ENCODE measurements at regions of chr10 and their contacts with region 1.

Region 1: GRCh38 chr10:230737-231136 is 95.5 kb downstream of the ZMYND11 start:
- DNase-seq: no peak
- ATAC-seq: peak; percentile 55
- H3K4me3 Mint-ChIP-seq: no peak overlapping the region
- H3K27ac Mint-ChIP-seq: no peak overlapping the region
- H3K4me1 Mint-ChIP-seq: peaks cover 18% of the 10 kb centered on the region
- H3K27me3 Mint-ChIP-seq: no peaks in the 10 kb centered on the region
- CTCF ChIP-seq: peak; percentile 70

Region 2: DNA sequence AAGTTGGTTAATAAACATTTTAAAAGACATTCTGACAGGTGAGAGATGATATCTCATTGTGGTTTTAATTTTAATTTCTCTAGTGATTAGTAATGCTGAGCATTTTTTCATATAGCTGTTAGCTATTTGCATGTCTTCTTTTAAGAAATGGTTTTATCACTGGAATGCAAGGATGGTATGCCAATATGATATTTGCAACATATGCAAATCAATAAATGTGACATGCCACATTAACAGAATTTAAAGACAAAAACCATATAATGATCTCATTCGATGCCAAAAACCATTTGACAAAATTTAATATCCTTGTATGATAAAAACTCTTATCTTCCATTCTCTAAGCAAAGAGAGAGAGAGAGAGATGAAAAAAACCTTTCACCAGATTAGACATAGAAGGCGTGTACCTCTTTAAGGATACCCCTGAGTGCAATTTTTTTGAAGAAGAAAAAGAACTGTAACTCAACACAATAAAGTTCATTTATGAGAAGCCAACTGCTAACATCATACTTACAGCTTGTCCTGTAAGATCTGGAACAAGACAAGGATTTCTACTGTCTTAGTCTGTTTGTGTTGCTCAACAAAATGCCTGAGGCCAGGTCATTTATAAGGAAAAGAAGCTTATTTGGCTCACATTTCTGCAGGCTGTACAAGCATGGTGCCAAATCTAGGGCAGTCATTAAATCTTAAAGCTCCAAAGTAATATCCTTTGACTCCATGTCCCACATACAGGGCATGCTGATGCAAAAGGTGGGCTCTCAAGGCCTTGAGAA is 135.2 kb before region 1 on chr10:
- CTCF ChIA-PET with region 1: no interaction called
- POLR2A ChIA-PET with region 1: no interaction called
- intact Hi-C with region 1: no loop called
- DNase-seq: no peak
- ATAC-seq: no peak
- H3K4me3 Mint-ChIP-seq: no peak overlapping the region
- H3K27ac Mint-ChIP-seq: no peak overlapping the region
- H3K4me1 Mint-ChIP-seq: no peaks in the 10 kb centered on the region
- H3K27me3 Mint-ChIP-seq: no peaks in the 10 kb centered on the region
- CTCF ChIP-seq: no peak

Region 3: GRCh38 chr10:209361-209760 is 21.4 kb before region 1 on chr10:
- CTCF ChIA-PET with region 1: interaction called, 10 read pairs
- POLR2A ChIA-PET with region 1: no interaction called
- intact Hi-C with region 1: no loop called
- DNase-seq: no peak
- ATAC-seq: no peak
- H3K4me3 Mint-ChIP-seq: no peak overlapping the region
- H3K27ac Mint-ChIP-seq: no peak overlapping the region
- H3K4me1 Mint-ChIP-seq: no peaks in the 10 kb centered on the region
- H3K27me3 Mint-ChIP-seq: no peaks in the 10 kb centered on the region
- CTCF ChIP-seq: no peak

Region 4: GRCh38 chr10:218798-219197 is 11.9 kb before region 1 on chr10:
- CTCF ChIA-PET with region 1: interaction called, 23 read pairs
- POLR2A ChIA-PET with region 1: no interaction called
- intact Hi-C with region 1: no loop called
- DNase-seq: no peak
- ATAC-seq: no peak
- H3K4me3 Mint-ChIP-seq: no peak overlapping the region
- H3K27ac Mint-ChIP-seq: no peak overlapping the region
- H3K4me1 Mint-ChIP-seq: peaks cover 28% of the 10 kb centered on the region
- H3K27me3 Mint-ChIP-seq: no peaks in the 10 kb centered on the region
- CTCF ChIP-seq: no peak

Region 5: GRCh38 chr10:248307-248706 is 17.6 kb after region 1 on chr10:
- CTCF ChIA-PET with region 1: interaction called, 14 read pairs
- POLR2A ChIA-PET with region 1: no interaction called
- intact Hi-C with region 1: no loop called
- DNase-seq: peak; percentile 7
- ATAC-seq: no peak
- H3K4me3 Mint-ChIP-seq: no peak overlapping the region
- H3K27ac Mint-ChIP-seq: no peak overlapping the region
- H3K4me1 Mint-ChIP-seq: no peaks in the 10 kb centered on the region
- H3K27me3 Mint-ChIP-seq: no peaks in the 10 kb centered on the region
- CTCF ChIP-seq: no peak

Measured in activated CD8-positive, alpha-beta T cell treated with anti-CD3 and anti-CD28 coated beads for 36 hours (primary cell).